ENCODE measurements at regions of chr14 and their contacts with region 1.

Region 1: DNA sequence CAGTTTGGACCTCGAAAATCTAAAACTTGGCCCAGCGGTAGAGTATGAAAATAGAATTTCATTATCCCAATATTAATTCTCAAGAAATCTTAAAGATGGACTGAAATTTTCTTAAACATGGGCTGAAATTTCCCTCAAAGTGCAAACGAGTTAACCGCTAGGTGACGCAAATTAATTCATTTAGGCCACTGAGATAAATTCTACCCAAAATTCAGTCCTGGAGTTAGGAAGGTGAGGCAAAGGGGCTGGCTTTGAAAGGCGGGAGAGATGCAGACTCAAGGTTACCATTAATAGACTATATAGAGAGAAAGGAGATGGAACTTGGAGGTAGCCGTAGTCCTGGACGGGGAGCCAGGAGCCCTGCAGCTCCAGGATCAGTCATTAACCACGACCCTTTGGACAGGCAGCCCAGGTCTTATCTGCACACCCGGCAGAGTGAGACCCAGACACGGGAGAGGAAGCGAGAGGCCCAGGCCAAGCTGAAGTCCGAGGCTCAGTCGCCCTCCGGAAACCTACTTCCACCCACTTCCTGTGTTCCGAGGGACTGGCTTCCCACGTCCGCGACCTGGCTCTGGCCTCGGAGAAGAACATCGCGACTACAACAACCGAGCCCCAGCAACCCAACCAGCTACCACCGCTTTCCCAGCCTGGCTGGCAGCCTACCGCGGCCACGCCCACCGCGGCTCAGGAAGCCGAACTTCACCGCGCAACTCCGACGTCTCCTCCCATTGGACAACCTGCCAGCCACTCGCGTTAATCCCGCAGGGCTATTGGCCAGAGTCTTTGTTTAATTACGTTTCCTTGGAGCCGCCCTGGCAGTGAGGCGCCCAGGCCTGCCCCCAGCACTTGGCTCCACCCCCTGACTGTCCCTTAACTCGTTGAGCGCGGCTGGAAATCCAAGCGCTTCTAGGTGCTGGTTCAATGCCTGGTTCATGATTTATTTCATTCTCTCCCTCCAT is at the start of gene EFCAB11:
- DNase-seq: peak; percentile 97
- ATAC-seq: peak; percentile 81
- H3K4me3 ChIP-seq: peak within 1 kb of the TSS; percentile 72 to 95 (median 84)
- H3K4me3 Mint-ChIP-seq: peak within 1 kb of the TSS; percentile 99
- H3K27ac ChIP-seq: peak within 1 kb of the TSS; percentile 99
- H3K27ac Mint-ChIP-seq: peak within 1 kb of the TSS; percentile 100
- H3K4me1 ChIP-seq: peaks cover 16 to 22% of the 10 kb centered on the region in 2 donors
- H3K4me1 Mint-ChIP-seq: peaks cover 32% of the 10 kb centered on the region
- H3K27me3 ChIP-seq: no peaks in the 10 kb centered on the region
- H3K27me3 Mint-ChIP-seq: no peaks in the 10 kb centered on the region
- CTCF ChIP-seq: peak; percentile 16
- total RNA-seq, gene EFCAB11: 13.8 and 14.2 TPM in 2 replicates

Region 2: DNA sequence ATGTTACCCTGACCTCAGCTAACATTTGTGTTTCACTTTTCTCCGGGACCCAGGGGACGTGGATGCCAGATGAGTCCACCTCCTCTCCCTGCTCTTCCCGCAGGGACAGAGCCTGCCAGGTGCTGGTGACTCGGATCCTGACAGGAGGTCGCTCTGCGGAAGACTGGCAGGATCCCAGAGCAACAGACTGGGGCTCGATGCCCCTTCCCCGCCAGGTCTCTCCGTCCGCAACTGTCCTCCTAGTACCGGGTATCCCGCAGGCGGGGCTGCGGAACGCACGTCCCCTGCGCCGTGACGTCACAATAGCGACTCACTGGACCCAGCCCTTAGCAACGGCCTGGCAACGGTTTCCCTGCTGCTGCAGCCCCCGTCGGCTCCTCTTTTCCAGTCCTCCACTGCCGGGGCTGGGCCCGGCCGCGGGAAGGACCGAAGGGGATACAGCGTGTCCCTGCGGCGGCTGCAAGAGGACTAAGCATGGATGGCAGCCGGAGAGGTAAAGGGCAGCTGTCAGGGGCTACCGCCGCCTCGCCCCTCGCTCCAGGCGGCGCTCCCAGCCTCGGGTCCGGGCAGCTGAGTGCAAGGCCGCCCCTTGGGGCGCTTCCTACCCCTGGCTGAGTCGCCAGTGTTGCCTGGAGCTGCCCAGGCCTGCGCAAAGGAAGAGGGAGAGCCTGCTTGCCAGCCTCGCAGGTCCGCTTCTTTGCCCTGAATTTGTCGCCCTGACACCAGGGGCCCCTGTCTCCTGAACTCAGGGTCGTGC is 1568.8 kb before region 1 on chr14 and contains the start of gene SPATA7:
- CTCF ChIA-PET with region 1: no interaction called
- POLR2A ChIA-PET with region 1: no interaction called
- intact Hi-C with region 1: loop called (anchors 5 kb)
- DNase-seq: peak; percentile 82
- ATAC-seq: peak; percentile 92
- H3K4me3 ChIP-seq: peak within 1 kb of the TSS; percentile 81 to 95 (median 93)
- H3K4me3 Mint-ChIP-seq: peak within 1 kb of the TSS; percentile 98
- H3K27ac ChIP-seq: peak within 1 kb of the TSS; percentile 38 to 67
- H3K27ac Mint-ChIP-seq: peak within 1 kb of the TSS; percentile 78
- H3K4me1 ChIP-seq: peaks cover 6 to 13% of the 10 kb centered on the region in 2 donors
- H3K4me1 Mint-ChIP-seq: peaks cover 20% of the 10 kb centered on the region
- H3K27me3 ChIP-seq: peaks cover 0 to 4% (median 0%) of the 10 kb centered on the region in 4 experiments
- H3K27me3 Mint-ChIP-seq: peaks cover 3% of the 10 kb centered on the region
- CTCF ChIP-seq: no peak
- total RNA-seq, gene SPATA7: 3.2 and 3.3 TPM in 2 replicates

Region 3: GRCh38 chr14:89303457-89304435 is 650.6 kb before region 1 on chr14:
- CTCF ChIA-PET with region 1: no interaction called
- POLR2A ChIA-PET with region 1: no interaction called
- intact Hi-C with region 1: loop called (anchors 2 kb)
- DNase-seq: peak; percentile 90
- ATAC-seq: peak; percentile 69
- H3K4me3 ChIP-seq: peak overlapping the region; percentile 26 to 61 (median 47)
- H3K4me3 Mint-ChIP-seq: peak overlapping the region; percentile 95
- H3K27ac ChIP-seq: peak overlapping the region; percentile 93 to 99
- H3K27ac Mint-ChIP-seq: peak overlapping the region; percentile 100
- H3K4me1 ChIP-seq: peaks cover 66 to 75% of the 10 kb centered on the region in 2 donors
- H3K4me1 Mint-ChIP-seq: peaks cover 77% of the 10 kb centered on the region
- H3K27me3 ChIP-seq: no peaks in the 10 kb centered on the region
- H3K27me3 Mint-ChIP-seq: no peaks in the 10 kb centered on the region
- CTCF ChIP-seq: no peak

Region 4: DNA sequence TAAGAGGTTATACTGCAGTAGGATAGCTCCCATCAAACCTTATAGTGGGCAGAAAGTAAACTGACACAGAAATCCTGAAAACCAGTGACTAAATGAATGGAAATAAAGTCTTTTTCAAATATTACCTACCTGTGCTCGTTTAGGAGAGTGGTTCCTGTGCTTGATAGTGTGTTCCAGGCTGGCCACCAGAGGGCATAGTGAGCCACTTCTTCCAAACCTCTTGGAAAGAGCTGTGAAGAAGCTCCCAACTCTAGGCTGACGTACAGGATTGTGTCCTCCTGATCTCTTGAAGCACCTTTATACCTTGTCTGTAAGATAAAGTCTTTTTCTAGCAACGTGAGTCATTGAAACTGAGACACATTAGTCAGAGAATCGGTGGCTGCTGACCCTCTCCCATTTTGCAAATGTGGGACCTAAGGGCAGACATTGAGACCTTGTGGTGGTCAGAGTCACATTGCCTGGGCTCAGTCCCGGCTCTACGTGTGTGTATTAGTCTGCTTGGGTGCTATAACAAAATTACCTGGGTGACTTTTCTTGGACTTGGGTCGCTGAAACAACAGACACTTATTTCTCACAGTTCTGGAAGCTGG is 19.0 kb after region 1 on chr14:
- CTCF ChIA-PET with region 1: interaction called, 24 read pairs
- POLR2A ChIA-PET with region 1: no interaction called
- intact Hi-C with region 1: no loop called
- DNase-seq: peak; percentile 55
- ATAC-seq: peak; percentile 41
- H3K4me3 ChIP-seq: no peak overlapping the region
- H3K4me3 Mint-ChIP-seq: no peak overlapping the region
- H3K27ac ChIP-seq: no peak overlapping the region
- H3K27ac Mint-ChIP-seq: no peak overlapping the region
- H3K4me1 ChIP-seq: no peaks in the 10 kb centered on the region
- H3K4me1 Mint-ChIP-seq: no peaks in the 10 kb centered on the region
- H3K27me3 ChIP-seq: no peaks in the 10 kb centered on the region
- H3K27me3 Mint-ChIP-seq: no peaks in the 10 kb centered on the region
- CTCF ChIP-seq: peak; percentile 84

Region 5: DNA sequence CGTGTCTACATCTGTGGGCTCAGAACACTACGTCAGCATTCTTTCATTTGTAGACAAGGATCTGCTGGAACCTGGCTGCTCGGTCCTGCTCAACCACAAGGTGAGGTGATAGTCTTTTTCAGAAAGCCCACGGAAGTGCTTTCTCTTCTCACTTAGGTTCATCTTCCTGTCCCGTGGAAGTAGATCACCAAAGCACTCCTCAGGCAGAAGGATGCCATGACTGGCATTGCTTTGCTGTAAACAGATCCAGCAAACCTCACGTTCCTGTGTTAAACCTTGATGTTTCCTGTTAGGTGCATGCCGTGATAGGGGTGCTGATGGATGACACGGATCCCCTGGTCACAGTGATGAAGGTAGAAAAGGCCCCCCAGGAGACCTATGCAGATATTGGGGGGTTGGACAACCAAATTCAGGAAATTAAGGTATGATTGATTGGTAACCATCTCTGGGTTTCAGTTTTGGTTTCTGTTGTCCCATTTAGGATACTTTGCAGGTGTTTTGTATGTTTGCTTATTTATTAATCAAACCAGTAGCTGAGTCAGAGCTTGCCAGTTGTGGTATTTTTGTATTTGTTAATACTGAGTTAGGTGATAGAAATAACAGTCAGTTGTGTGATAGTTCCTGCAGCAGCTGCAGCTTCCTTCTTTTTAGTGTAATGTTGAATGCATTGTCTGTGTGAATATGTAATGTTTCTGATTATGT is 309.6 kb after region 1 on chr14:
- CTCF ChIA-PET with region 1: no interaction called
- POLR2A ChIA-PET with region 1: no interaction called
- intact Hi-C with region 1: no loop called
- DNase-seq: no peak
- ATAC-seq: no peak
- H3K4me3 ChIP-seq: no peak overlapping the region
- H3K4me3 Mint-ChIP-seq: no peak overlapping the region
- H3K27ac ChIP-seq: no peak overlapping the region
- H3K27ac Mint-ChIP-seq: no peak overlapping the region
- H3K4me1 ChIP-seq: no peaks in the 10 kb centered on the region
- H3K4me1 Mint-ChIP-seq: no peaks in the 10 kb centered on the region
- H3K27me3 ChIP-seq: no peaks in the 10 kb centered on the region
- H3K27me3 Mint-ChIP-seq: no peaks in the 10 kb centered on the region
- CTCF ChIP-seq: no peak

Region 6: DNA sequence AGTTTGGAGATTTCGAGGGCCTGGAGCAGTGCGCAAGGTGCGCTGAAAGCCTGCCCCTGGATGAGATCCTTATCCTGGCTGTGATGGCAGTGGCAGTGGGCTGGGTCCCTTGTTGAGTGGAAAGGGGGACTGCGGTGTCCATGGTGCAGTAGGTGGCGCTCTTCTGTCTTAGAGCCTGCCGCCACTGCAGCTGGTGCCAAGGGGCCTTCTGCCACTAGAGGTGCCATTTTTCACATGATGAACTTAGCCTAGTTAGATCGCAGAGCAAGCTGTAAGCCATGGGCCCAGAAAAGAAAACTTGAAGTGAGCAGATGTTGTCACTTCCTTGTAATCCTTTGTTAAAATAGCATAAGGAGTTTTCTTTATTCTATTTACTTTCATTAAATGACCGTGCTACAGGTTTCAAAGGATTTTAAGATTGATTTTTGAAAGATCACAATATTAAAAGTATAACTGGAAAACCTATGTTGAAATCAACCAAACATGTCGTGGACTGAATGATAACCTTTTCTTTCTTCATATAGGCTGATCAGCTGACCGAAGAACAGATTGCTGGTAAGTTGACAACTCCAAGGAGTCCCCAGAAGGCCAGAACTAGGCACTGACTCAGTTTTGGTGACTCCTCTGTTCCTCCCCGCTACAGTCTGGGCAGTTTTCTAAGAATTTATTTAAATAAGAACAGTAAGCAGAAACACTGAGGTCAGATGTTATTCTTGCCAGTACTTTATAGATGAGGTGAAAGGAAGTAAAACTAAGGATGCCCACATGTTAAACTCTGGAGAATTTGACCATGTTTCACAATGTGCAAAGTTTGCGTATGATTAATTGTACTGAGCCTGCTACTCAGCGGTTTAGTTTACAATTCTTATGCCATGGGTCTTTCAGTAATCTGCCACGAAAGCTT is 445.4 kb after region 1 on chr14:
- CTCF ChIA-PET with region 1: interaction called, 4 read pairs
- POLR2A ChIA-PET with region 1: no interaction called
- intact Hi-C with region 1: loop called (anchors 2 kb)
- DNase-seq: peak; percentile 92
- ATAC-seq: peak; percentile 39
- H3K4me3 ChIP-seq: peak overlapping the region in 1 of 5 experiments; percentile 85
- H3K4me3 Mint-ChIP-seq: peak overlapping the region; percentile 96
- H3K27ac ChIP-seq: peak overlapping the region; percentile 93 to 95
- H3K27ac Mint-ChIP-seq: peak overlapping the region; percentile 98
- H3K4me1 ChIP-seq: peaks cover 39 to 45% of the 10 kb centered on the region in 2 donors
- H3K4me1 Mint-ChIP-seq: peaks cover 46% of the 10 kb centered on the region
- H3K27me3 ChIP-seq: no peaks in the 10 kb centered on the region
- H3K27me3 Mint-ChIP-seq: no peaks in the 10 kb centered on the region
- CTCF ChIP-seq: peak; percentile 100

Region 7: DNA sequence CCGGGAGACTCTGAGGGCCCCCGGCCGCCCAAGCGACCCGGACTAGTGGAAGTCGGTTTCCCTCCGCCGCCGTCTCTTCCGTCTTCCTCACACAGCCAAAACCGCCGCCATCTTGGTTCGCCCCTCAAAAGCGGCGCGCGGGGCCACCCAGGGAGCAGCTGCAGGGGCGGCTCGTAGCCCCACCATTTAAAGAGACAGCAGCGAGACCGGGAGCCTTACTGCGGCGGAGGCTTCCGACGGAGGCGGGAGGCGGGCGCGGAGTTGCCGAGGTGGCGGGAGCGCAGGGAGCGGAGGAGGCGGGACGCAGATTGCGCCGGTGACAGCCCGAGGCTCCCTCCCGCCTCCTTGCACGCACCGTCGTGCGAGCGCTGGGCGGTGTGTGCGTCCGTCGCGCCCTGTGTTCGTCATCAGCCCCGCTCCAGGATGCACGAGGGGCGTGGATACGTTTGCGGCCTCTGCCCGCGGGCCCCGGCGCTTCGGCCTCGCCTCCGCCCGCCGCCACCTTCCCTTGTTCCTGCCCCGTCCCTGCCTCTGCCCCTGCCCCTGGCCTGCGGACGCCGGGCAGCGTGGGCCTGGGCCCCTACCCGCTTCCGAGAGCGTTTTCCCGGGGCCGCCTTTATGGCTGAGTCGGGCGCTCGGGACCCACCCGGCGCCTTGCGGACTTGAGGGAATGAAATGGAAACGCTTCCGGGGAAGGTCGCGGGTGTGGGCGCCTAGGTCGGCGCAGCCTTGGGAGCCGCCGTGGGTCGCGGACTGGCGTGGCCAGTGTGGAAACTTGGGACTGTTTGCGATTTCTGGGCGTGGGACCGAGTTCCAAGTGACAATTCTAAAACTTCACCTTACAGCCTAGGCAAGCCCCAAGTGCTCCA is 1556.1 kb after region 1 on chr14 and contains the start of gene PPP4R3A:
- CTCF ChIA-PET with region 1: no interaction called
- POLR2A ChIA-PET with region 1: no interaction called
- intact Hi-C with region 1: loop called (anchors 10 kb)
- DNase-seq: peak; percentile 97
- ATAC-seq: peak; percentile 87
- H3K4me3 ChIP-seq: peak within 1 kb of the TSS; percentile 72 to 99 (median 84)
- H3K4me3 Mint-ChIP-seq: peak within 1 kb of the TSS; percentile 99
- H3K27ac ChIP-seq: peak within 1 kb of the TSS; percentile 97 to 100
- H3K27ac Mint-ChIP-seq: peak within 1 kb of the TSS; percentile 100
- H3K4me1 ChIP-seq: peaks cover 32% of the 10 kb centered on the region in 2 donors
- H3K4me1 Mint-ChIP-seq: peaks cover 37% of the 10 kb centered on the region
- H3K27me3 ChIP-seq: no peaks in the 10 kb centered on the region
- H3K27me3 Mint-ChIP-seq: no peaks in the 10 kb centered on the region
- CTCF ChIP-seq: no peak
- total RNA-seq, gene PPP4R3A: 184 and 189 TPM in 2 replicates